ENCODE measurements at regions of chr11 and their contacts with region 1.

Region 1: DNA sequence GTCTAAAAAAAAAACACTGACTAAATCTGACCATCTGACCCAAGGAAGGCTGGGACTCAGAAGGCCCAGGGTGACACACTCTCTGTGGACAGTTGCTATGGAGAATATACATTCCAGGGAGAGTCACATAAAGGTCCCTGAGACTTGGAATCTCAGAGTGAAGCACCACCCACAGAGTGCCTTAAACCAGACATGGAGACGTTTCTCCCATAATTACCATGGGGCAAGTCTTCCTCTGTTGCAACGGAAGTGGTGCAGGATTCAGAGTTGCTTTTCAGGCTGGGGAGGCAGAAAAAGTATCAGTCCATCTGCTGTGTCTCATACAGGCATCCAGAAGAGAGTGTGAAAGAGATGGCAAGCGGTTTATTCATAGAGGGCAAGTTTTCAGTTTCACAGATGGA is 58.7 kb upstream of the SLN start:
- DNase-seq: no peak

Region 2: GRCh38 chr11:107071129-107071528 is 699.4 kb before region 1 on chr11:
- CTCF ChIA-PET with region 1: no interaction called
- POLR2A ChIA-PET with region 1: no interaction called
- DNase-seq: no peak

Region 3: DNA sequence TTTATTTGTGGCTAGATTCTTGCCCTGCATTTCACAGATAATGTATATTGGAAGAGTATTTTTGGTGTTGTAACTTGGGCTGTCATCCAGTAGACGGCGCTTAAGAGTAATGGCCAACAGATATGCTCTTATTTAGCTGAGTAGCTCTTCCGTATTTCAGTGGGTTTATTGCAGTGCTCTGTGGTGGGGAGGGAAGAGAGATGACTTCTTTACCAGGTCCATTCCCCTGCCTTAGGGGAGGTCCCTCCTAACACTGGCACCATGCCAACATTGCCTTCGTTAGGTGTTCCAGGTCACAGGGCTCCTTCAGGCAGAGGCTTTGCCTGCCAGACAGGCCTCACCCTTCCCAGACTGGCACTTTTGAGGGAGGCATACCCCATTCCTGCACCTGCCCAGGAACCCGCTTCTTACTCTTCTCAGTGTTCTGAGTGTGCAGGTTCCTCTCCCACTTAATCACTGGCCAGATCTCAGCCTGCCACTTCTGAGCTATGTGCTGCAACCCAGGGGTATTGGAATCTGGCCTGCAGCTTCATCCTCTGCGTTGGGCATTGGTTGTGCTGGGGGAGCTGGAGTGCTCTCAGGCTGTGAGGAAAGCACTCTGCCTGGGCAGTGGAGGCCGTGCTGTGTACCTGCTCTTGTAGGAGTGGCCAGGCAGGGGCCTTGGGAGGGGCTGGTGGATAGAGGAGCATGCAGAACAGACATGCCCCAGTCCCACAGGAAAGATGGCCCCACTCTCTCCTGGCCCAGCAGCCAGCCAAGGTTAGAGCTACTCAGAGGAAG is 29.3 kb before region 1 on chr11:
- CTCF ChIA-PET with region 1: interaction called, 19 read pairs
- POLR2A ChIA-PET with region 1: no interaction called
- DNase-seq: peak; percentile 36

Region 4: GRCh38 chr11:107785401-107785800 is 14.8 kb after region 1 on chr11:
- CTCF ChIA-PET with region 1: no interaction called
- POLR2A ChIA-PET with region 1: no interaction called
- DNase-seq: no peak

Measured in HEK293T (cell line).